Heart left ventricle (tissue), 16 donors: ENCODE measurements at regions of chr11 and their contacts with region 1.

Region 1: GRCh38 chr11:35617687-35618496 is at the start of gene FJX1:
- DNase-seq: peak; percentile 61 to 79 (median 72)
- ATAC-seq: peak; percentile 48 to 80 (median 78)
- H3K4me3 ChIP-seq: peak within 1 kb of the TSS; percentile 49 to 73 (median 63)
- H3K27ac ChIP-seq: peak within 1 kb of the TSS; percentile 37 to 91 (median 83)
- H3K4me1 ChIP-seq: peaks cover 3 to 43% (median 25%) of the 10 kb centered on the region in 12 donors
- H3K27me3 ChIP-seq: peaks cover 0 to 61% (median 4%) of the 10 kb centered on the region in 9 donors
- CTCF ChIP-seq: no peak
- POLR2A ChIP-seq: peak in 1 of 2 donors; percentile 35
- total RNA-seq, gene FJX1: 0.55 to 7.2 (median 2.3) TPM

Region 2: GRCh38 chr11:35650006-35650405 is 32.1 kb after region 1 on chr11:
- intact Hi-C with region 1: no loop called
- DNase-seq: no peak
- ATAC-seq: no peak
- H3K4me3 ChIP-seq: no peak overlapping the region
- H3K27ac ChIP-seq: no peak overlapping the region
- H3K4me1 ChIP-seq: peaks cover 0 to 9% (median 0%) of the 10 kb centered on the region in 12 donors
- H3K27me3 ChIP-seq: no peaks in the 10 kb centered on the region
- CTCF ChIP-seq: no peak
- POLR2A ChIP-seq: no peak

Region 3: DNA sequence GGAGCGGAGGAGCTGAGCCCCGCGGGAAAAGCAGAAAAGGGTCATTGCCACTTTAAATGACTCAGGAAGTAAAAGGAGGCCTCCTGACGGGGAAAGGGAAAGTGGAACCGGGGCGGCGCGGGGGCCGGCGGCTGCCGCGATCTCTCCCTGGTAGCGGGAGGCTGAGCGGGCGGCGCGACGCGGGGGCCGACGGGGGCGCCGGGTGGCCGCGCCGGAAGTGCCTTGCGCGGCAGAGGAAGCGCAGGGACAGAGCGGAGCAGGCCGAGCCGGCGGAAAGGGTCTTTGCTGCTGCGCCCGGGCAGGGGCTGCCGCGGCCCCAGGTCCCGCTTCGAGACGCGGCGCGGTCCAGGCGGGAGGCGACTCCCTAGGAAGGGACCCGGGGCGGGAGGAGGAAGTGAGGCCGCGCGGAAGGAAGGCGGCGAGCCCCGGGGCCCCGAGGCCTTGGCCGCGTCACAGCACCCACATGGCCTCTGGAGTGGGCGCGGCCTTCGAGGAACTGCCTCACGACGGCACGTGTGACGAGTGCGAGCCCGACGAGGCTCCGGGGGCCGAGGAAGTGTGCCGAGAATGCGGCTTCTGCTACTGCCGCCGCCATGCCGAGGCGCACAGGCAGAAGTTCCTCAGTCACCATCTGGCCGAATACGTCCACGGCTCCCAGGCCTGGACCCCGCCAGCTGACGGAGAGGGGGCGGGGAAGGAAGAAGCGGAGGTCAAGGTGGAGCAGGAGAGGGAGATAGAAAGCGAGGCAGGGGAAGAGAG is 44.9 kb after region 1 on chr11 and contains the start of gene TRIM44:
- intact Hi-C with region 1: loop called in 8 of 10 experiments (anchors 1 to 5 kb)
- DNase-seq: peak; percentile 87 to 92 (median 89)
- ATAC-seq: peak; percentile 91 to 97 (median 95)
- H3K4me3 ChIP-seq: peak within 1 kb of the TSS; percentile 56 to 92 (median 78)
- H3K27ac ChIP-seq: peak within 1 kb of the TSS; percentile 89 to 99 (median 96)
- H3K4me1 ChIP-seq: peaks cover 0 to 31% (median 21%) of the 10 kb centered on the region in 12 donors
- H3K27me3 ChIP-seq: peaks cover 0 to 2% (median 0%) of the 10 kb centered on the region in 9 donors
- CTCF ChIP-seq: no peak
- POLR2A ChIP-seq: peak in 1 of 2 donors; percentile 70
- total RNA-seq, gene TRIM44: 34.5 to 55.3 (median 48.0) TPM

Region 4: DNA sequence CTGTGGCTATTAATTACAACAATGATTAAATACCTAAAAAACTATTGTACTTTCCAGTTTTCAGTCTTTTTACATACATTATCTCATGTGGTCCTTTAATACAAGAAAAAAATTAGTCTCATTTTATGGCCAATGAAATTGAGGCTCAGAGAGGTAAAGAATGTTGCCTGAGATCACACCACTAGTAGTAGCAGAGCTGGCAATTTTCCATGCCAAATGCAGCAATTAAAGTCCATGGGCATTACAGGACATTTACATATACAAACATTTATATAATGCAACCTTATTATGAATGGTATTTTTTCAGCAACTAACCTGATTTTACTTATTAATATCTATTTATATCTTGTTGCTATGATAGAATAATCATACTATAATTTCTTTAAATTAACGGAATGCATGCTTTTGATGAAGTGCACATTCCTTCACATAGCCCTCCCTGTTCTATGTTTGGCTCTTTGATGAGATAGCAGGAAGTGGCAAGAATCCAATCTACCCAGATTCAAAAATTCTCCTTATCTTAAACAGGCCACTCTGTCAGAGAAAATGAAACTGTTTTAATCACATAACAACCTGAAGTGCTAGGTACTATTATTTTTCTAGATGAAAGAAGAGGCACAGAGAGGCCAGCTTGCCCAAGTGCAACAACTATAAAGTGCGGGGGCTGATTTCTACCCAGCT is 205.1 kb after region 1 on chr11:
- intact Hi-C with region 1: loop called in 9 of 10 experiments (anchors 5 kb)
- DNase-seq: no peak
- ATAC-seq: no peak
- H3K4me3 ChIP-seq: no peak overlapping the region
- H3K27ac ChIP-seq: no peak overlapping the region
- H3K4me1 ChIP-seq: peaks cover 0 to 31% (median 14%) of the 10 kb centered on the region in 12 donors
- H3K27me3 ChIP-seq: no peaks in the 10 kb centered on the region
- CTCF ChIP-seq: no peak
- POLR2A ChIP-seq: no peak

Region 5: DNA sequence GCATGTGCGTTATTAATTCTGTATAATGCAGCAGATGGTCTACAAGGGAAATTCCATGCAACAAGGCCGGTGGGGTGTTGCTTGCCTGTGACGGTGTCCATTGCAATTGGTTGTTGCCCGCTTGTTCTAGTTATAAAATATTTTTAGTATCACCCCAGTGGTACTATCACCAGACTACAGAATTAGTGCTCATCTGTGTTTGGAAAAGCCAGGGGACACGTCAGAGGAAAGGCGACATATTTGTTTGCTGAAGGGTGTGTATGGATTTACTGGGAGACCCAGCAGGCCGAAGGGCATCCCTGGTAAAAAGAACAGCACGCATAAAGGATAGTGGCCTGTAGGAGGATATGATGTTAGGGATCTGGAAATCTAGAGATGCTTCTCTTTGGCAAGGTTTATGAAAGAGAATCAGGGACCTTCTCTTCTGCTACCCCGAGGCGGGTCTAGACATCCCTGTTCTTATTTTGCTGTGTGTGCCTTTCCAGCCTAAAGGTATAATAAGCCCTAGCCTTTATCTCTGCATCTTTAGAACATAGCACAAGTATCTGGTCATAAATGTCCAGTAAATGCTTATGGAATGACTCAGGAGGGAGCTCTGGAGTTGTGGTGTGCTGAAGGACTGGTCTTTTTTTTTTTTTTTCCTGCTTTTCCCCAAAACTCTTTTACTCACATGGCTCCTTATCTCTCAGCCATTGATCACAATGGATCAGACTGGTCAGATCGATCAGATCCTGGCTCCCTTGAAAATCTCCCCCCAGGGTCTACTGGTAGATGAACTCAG is 416.8 kb after region 1 on chr11:
- intact Hi-C with region 1: loop called in 2 of 10 experiments (anchors 5 to 10 kb)
- DNase-seq: no peak
- ATAC-seq: no peak
- H3K4me3 ChIP-seq: no peak overlapping the region
- H3K27ac ChIP-seq: no peak overlapping the region
- H3K4me1 ChIP-seq: peaks cover 0 to 25% (median 7%) of the 10 kb centered on the region in 12 donors
- H3K27me3 ChIP-seq: no peaks in the 10 kb centered on the region
- CTCF ChIP-seq: no peak
- POLR2A ChIP-seq: no peak

Region 6: GRCh38 chr11:36056160-36056751 is 438.4 kb after region 1 on chr11:
- intact Hi-C with region 1: loop called in 2 of 10 experiments (anchors 10 kb)
- DNase-seq: no peak
- ATAC-seq: no peak
- H3K4me3 ChIP-seq: no peak overlapping the region
- H3K27ac ChIP-seq: no peak overlapping the region
- H3K4me1 ChIP-seq: peaks cover 0 to 21% (median 2%) of the 10 kb centered on the region in 12 donors
- H3K27me3 ChIP-seq: no peaks in the 10 kb centered on the region
- CTCF ChIP-seq: peak in 10 of 12 donors; percentile 5 to 47 (median 28)
- POLR2A ChIP-seq: no peak

Region 7: GRCh38 chr11:36139767-36140166 is 521.9 kb after region 1 on chr11:
- intact Hi-C with region 1: loop called in 4 of 10 experiments (anchors 5 kb)
- DNase-seq: no peak
- ATAC-seq: no peak
- H3K4me3 ChIP-seq: no peak overlapping the region
- H3K27ac ChIP-seq: no peak overlapping the region
- H3K4me1 ChIP-seq: no peaks in the 10 kb centered on the region
- H3K27me3 ChIP-seq: no peaks in the 10 kb centered on the region
- CTCF ChIP-seq: no peak
- POLR2A ChIP-seq: no peak

Region 8: GRCh38 chr11:36265793-36266628 is 648.1 kb after region 1 on chr11:
- intact Hi-C with region 1: loop called in 7 of 10 experiments (anchors 1 to 5 kb)
- DNase-seq: peak; percentile 16 to 72 (median 44)
- ATAC-seq: peak; percentile 34 to 76 (median 72)
- H3K4me3 ChIP-seq: no peak overlapping the region
- H3K27ac ChIP-seq: no peak overlapping the region
- H3K4me1 ChIP-seq: peaks cover 0 to 3% (median 0%) of the 10 kb centered on the region in 12 donors
- H3K27me3 ChIP-seq: peaks cover 0 to 7% (median 0%) of the 10 kb centered on the region in 9 donors
- CTCF ChIP-seq: peak; percentile 63 to 84 (median 74)
- POLR2A ChIP-seq: no peak